Activated naive CD4-positive, alpha-beta T cell treated with anti-CD3 and anti-CD28 coated beads for 36 hours (primary cell): ENCODE measurements at regions of chrX and their contacts with region 1.

Region 1: DNA sequence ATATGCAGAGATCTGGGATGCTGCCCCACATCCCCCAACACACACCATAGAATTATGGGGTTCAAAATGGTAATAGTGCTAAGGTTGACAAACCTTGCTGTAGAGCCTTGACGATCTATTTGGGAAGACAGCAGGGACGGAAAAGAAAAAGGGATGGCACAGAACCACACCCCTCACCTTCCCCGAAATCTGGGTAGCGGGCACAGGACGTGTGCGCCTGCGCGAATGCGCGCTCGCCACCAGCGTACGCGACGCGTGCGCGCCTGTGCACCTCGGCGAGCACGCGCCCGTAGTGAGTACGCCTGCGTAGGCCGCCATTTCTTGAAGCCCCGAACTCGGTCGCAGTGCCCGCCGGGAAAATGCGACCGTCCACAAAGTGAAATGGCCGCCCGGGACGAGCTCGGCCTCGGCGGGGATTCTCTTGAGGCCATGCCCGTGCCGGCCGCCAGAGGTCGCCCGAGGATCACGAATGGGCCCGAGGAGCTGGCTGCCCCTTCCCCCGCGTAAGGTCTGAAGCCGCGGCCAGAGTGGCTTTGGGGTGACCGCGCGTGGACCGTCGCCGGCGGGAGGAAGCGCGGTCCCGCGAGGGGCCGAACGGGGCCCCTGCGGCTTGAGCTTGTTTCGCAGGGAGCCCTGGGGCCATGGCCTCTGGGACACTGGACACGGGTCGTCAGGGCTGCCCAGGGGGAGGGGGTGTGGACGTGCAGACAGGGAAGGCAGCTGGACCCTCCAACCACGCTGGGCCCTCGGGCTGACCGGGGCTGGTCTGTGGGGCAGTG is 43.6 kb downstream of the ZNF185 start:
- DNase-seq: peak; percentile 90
- H3K4me3 Mint-ChIP-seq: peak overlapping the region; percentile 79
- H3K27ac Mint-ChIP-seq: peak overlapping the region; percentile 76
- H3K4me1 Mint-ChIP-seq: no peaks in the 10 kb centered on the region
- H3K27me3 Mint-ChIP-seq: no peaks in the 10 kb centered on the region

Region 2: GRCh38 chrX:152830312-152831305 is 110.9 kb before region 1 on chrX and contains the starts of genes CETN2 and NSDHL:
- CTCF ChIA-PET with region 1: no interaction called
- intact Hi-C with region 1: loop called (anchors 5 kb)
- DNase-seq: peak; percentile 95
- H3K4me3 Mint-ChIP-seq: peak within 1 kb of the TSS; percentile 88
- H3K27ac Mint-ChIP-seq: peak within 1 kb of the TSS; percentile 81
- H3K4me1 Mint-ChIP-seq: peaks cover 26% of the 10 kb centered on the region
- H3K27me3 Mint-ChIP-seq: no peaks in the 10 kb centered on the region
- total RNA-seq, gene CETN2: 10.1 to 11.9 TPM
- total RNA-seq, gene NSDHL: 13.3 to 16.2 TPM

Region 3: DNA sequence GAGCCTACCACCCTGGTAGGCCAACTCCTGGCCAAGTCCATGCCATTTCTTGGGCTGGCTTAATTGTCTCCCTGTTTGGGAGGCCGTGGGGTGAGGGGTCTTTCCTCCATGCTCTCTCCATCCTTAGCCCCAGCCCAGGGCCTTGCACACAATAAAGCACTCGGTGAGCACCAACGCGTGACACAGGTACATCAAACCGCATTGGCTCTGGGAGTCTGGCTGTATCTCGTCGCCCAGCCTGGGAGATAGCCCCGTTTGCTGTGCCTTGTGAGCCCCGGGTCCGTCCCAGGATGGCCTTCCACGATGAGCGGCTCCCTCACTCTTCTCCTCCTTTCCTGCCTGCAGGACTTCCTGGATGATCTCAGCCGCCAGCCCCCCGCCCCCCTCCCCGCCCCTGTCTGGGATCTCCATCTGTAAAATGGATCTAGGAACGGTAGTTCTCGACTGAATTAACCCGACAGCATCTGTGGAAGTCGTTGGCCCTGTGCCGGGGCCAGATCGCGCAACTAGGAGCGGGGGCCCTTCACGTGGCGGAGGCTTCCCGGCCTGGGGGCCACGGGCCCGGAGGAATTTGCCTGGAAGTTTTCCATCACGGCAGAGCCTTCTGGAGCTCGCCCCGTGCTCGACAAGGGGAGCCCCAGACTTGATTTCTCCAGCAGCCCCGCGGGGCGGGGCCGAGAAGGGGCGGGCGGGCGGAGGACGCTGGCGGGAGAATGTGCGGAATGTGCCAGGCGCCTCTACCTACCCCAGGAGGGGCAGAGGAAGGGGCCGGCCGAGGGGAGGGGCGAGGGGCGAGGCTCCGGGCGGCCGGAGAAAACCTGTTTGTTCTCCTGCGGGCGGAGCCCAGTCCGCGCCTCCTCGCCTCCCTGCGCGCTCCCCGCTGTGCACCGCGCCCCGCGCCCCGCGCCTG is 44.0 kb before region 1 on chrX and contains the start of gene ZNF185:
- CTCF ChIA-PET with region 1: no interaction called
- intact Hi-C with region 1: no loop called
- DNase-seq: peak; percentile 15
- H3K4me3 Mint-ChIP-seq: no peak within 1 kb of the TSS
- H3K27ac Mint-ChIP-seq: no peak within 1 kb of the TSS
- H3K4me1 Mint-ChIP-seq: peaks cover 2% of the 10 kb centered on the region
- H3K27me3 Mint-ChIP-seq: peaks cover 15% of the 10 kb centered on the region
- total RNA-seq, gene ZNF185: 1.9 to 2.3 TPM

Region 4: GRCh38 chrX:153032397-153033118 is 91.0 kb after region 1 on chrX:
- CTCF ChIA-PET with region 1: interaction called, 7 read pairs
- intact Hi-C with region 1: loop called (anchors 5 kb)
- DNase-seq: peak; percentile 73
- H3K4me3 Mint-ChIP-seq: peak overlapping the region; percentile 81
- H3K27ac Mint-ChIP-seq: peak overlapping the region; percentile 87
- H3K4me1 Mint-ChIP-seq: peaks cover 8% of the 10 kb centered on the region
- H3K27me3 Mint-ChIP-seq: no peaks in the 10 kb centered on the region

Region 5: GRCh38 chrX:153411255-153411987 is 469.9 kb after region 1 on chrX and contains the start of gene ZFP92:
- CTCF ChIA-PET with region 1: no interaction called
- intact Hi-C with region 1: loop called (anchors 5 kb)
- DNase-seq: peak; percentile 29
- H3K4me3 Mint-ChIP-seq: peak within 1 kb of the TSS; percentile 62
- H3K27ac Mint-ChIP-seq: no peak within 1 kb of the TSS
- H3K4me1 Mint-ChIP-seq: peaks cover 7% of the 10 kb centered on the region
- H3K27me3 Mint-ChIP-seq: no peaks in the 10 kb centered on the region
- total RNA-seq, gene ZFP92: 0.59 to 0.74 TPM

Region 6: GRCh38 chrX:153438531-153438930 is 497.0 kb after region 1 on chrX:
- CTCF ChIA-PET with region 1: no interaction called
- intact Hi-C with region 1: loop called (anchors 1 kb)
- DNase-seq: peak; percentile 23
- H3K4me3 Mint-ChIP-seq: no peak overlapping the region
- H3K27ac Mint-ChIP-seq: no peak overlapping the region
- H3K4me1 Mint-ChIP-seq: no peaks in the 10 kb centered on the region
- H3K27me3 Mint-ChIP-seq: no peaks in the 10 kb centered on the region

Region 7: GRCh38 chrX:153470435-153471363 is 529.2 kb after region 1 on chrX and contains the start of gene HAUS7:
- CTCF ChIA-PET with region 1: no interaction called
- intact Hi-C with region 1: loop called (anchors 1 kb)
- DNase-seq: peak; percentile 93
- H3K4me3 Mint-ChIP-seq: peak within 1 kb of the TSS; percentile 78
- H3K27ac Mint-ChIP-seq: peak within 1 kb of the TSS; percentile 77
- H3K4me1 Mint-ChIP-seq: peaks cover 15% of the 10 kb centered on the region
- H3K27me3 Mint-ChIP-seq: no peaks in the 10 kb centered on the region
- total RNA-seq, gene HAUS7: 63.5 to 68.5 TPM

Region 8: DNA sequence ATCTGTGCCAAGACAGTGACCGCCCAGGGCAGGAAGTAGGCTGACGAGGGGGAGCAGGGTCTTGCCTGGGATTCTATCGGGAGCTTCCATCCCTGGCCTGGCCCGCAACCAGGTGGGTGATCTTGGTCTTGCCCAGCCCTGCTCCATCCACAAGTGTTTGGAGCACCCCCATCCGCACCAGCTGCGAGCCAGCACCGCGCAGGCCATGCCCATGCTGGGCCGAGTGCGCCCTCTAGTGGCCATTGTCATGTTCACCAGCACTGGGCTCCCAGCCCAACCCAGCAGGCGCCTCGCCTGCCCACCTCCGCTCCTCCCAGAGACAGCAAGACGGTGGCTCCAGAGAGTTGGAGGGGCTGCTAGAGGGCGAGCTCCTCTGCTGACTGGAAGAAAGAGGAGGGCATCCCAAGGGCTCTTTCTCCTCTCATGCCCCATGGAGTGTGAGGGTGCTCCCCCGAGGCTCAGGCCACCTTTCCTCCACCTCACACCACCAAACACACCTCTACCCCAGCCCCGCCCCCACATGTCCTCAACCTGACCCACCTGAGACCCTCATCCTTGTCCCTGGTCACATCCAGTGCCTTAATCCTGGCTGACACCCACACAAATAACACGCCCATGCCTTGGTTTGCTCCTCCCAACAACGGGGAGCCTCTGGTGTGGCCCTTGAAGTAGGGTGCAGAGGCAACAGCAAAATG is 566.1 kb after region 1 on chrX:
- CTCF ChIA-PET with region 1: no interaction called
- intact Hi-C with region 1: loop called (anchors 1 kb)
- DNase-seq: peak; percentile 87
- H3K4me3 Mint-ChIP-seq: no peak overlapping the region
- H3K27ac Mint-ChIP-seq: no peak overlapping the region
- H3K4me1 Mint-ChIP-seq: peaks cover 1% of the 10 kb centered on the region
- H3K27me3 Mint-ChIP-seq: no peaks in the 10 kb centered on the region